Cardiac septum (tissue), 1 donor: ENCODE measurements at regions of chr3 and their contacts with region 1.

Region 1: DNA sequence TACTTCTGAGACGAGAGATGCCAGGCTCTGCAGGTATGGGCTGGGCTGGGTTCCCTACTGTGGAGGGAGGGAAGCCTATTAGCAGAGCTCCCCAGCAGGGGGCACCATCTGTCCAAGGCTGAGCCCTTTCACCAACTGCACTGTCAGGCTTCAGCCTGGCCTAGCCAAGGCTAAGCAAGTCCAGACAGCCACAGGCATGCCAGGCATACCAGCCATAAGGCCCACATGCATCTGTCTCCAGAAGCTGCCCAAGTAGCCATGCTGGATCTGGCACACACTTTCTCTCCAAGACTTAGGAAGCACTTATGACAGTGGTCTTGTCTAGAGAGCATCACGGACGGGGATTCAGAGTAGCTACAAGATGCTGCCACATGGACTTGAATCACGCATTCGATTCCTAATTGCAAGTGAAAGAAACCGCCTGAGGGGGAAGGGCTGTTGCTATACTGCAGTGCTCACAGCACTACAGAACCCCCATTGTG is 28.3 kb downstream of the RUVBL1 start:
- DNase-seq: peak; percentile 87

Region 2: GRCh38 chr3:128133273-128134084 is 38.2 kb after region 1 on chr3:
- intact Hi-C with region 1: loop called (anchors 2 kb)
- DNase-seq: no peak

Region 3: DNA sequence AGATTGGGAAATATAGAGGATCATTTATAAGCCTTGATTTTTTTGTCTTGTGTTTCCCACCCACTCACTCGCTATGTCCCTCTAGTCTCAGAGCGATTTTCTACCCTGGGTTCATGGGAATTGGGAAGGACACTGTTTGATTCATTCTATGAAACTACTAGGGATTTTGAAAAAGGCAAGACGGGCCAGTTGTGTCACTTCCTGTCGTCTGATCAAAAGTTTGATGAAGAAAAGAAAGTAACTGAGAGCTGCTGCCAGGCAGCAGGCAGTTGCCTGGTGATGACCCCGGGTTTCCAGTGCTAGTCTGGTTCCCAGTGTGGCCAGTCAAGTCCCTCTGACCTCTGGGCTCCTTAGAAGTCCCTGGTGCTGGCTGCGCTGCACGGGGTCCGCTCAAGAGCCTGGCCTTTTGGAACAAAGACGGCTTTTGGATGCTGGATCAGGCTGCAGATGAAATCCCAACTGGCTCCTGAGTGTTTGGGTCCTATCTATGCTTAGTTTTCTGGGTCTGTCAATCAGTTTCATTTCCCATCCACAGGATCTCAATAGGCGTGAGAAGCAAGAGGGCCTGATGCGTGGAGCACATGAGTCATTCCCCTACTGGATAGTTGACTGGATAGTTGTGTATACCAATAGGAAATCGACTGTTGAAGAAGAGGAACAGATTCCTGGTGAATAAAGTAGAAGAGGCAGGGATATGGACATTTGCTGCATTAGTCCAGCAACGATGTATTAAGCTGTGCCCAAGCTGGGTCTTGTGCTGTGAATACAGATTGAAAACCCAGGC is 147.7 kb after region 1 on chr3:
- intact Hi-C with region 1: no loop called
- DNase-seq: no peak

Region 4: DNA sequence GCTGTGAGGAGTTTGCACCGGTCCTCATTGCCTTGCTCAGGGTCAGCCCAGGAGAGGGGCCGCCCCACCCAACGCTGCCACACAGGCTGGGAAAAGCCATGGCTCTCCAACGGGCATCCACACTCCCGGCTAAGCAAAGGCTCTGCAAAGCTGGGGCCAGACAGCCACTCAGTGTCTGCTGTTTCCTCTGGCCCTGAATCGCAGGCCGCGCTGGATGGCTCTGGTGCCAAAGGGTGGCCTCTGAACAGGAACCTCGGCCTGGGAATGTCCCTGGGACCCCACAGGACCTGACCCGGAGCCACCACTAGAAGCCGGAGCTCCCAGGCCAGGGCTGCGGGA is 512.4 kb after region 1 on chr3:
- intact Hi-C with region 1: loop called (anchors 2 kb)
- DNase-seq: no peak